ENCODE measurements at regions of chr16 and their contacts with region 1.

Region 1: GRCh38 chr16:70380861-70381603 is 34.3 kb downstream of the DDX19A start:
- DNase-seq: peak; percentile 97
- H3K4me3 ChIP-seq: peak overlapping the region; percentile 74 to 95 (median 83)
- H3K27ac ChIP-seq: peak overlapping the region; percentile 54
- H3K4me1 ChIP-seq: peaks cover 7% of the 10 kb centered on the region
- H3K27me3 ChIP-seq: no peaks in the 10 kb centered on the region
- CTCF ChIP-seq: peak; percentile 12 to 54

Region 2: DNA sequence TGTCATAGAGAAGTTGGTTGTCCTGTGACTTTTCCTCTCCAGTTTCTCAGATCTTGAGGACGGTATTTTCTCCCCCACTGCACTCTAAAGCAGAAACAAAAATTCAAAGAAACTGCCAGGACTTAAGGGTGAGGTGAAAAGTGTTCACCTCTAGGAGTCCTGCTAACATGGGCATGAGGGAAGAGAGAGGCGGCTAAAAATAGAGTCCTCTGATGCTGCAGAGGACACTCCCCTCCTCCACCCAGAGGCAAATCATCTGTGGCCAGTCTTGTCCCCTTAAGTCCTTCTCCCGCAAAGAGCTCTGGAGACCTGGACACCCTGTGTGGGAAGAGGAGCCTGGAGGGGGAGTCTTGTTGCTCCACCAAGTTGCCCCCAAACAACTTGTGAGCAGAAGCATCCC is 39.0 kb before region 1 on chr16:
- CTCF ChIA-PET with region 1: no interaction called
- dilution Hi-C with region 1: no loop called
- in situ Hi-C with region 1: no loop called
- intact Hi-C with region 1: no loop called
- DNase-seq: no peak
- H3K4me3 ChIP-seq: no peak overlapping the region
- H3K27ac ChIP-seq: no peak overlapping the region
- H3K4me1 ChIP-seq: peaks cover 5% of the 10 kb centered on the region
- H3K27me3 ChIP-seq: no peaks in the 10 kb centered on the region
- CTCF ChIP-seq: no peak

Region 3: GRCh38 chr16:70454222-70455034 is 73.4 kb after region 1 on chr16 and contains the start of gene FCSK:
- CTCF ChIA-PET with region 1: no interaction called
- dilution Hi-C with region 1: no loop called
- in situ Hi-C with region 1: no loop called
- intact Hi-C with region 1: loop called (anchors 1 kb)
- DNase-seq: peak; percentile 67
- H3K4me3 ChIP-seq: peak within 1 kb of the TSS; percentile 71 to 96 (median 75)
- H3K27ac ChIP-seq: peak within 1 kb of the TSS; percentile 93
- H3K4me1 ChIP-seq: peaks cover 5% of the 10 kb centered on the region
- H3K27me3 ChIP-seq: no peaks in the 10 kb centered on the region
- CTCF ChIP-seq: no peak
- total RNA-seq, gene FCSK: 12.2 to 12.7 TPM

Region 4: GRCh38 chr16:70478912-70479341 is 97.9 kb after region 1 on chr16:
- CTCF ChIA-PET with region 1: no interaction called
- dilution Hi-C with region 1: no loop called
- in situ Hi-C with region 1: no loop called
- intact Hi-C with region 1: loop called (anchors 5 kb)
- DNase-seq: no peak
- H3K4me3 ChIP-seq: no peak overlapping the region
- H3K27ac ChIP-seq: no peak overlapping the region
- H3K4me1 ChIP-seq: peaks cover 40% of the 10 kb centered on the region
- H3K27me3 ChIP-seq: no peaks in the 10 kb centered on the region
- CTCF ChIP-seq: no peak

Region 5: GRCh38 chr16:70523076-70523742 is 142.2 kb after region 1 on chr16 and contains the start of gene COG4:
- CTCF ChIA-PET with region 1: no interaction called
- dilution Hi-C with region 1: no loop called
- in situ Hi-C with region 1: no loop called
- intact Hi-C with region 1: loop called (anchors 2 kb)
- DNase-seq: peak; percentile 77
- H3K4me3 ChIP-seq: peak within 1 kb of the TSS; percentile 90 to 97 (median 93)
- H3K27ac ChIP-seq: peak within 1 kb of the TSS; percentile 83
- H3K4me1 ChIP-seq: peaks cover 35% of the 10 kb centered on the region
- H3K27me3 ChIP-seq: no peaks in the 10 kb centered on the region
- CTCF ChIP-seq: no peak
- total RNA-seq, gene COG4: 42.7 to 52.0 TPM

Measured in mammary epithelial cell (primary cell).